Motor neuron (in vitro differentiated cells): ENCODE measurements at regions of chr3 and their contacts with region 1.

Region 1: GRCh38 chr3:142828703-142829305 is 60.1 kb downstream of the PCOLCE2 start:
- ATAC-seq: peak; percentile 95 to 100 (median 100)
- H3K4me3 ChIP-seq: no peak overlapping the region
- H3K27ac ChIP-seq: no peak overlapping the region
- H3K4me1 ChIP-seq: no peaks in the 10 kb centered on the region

Region 2: GRCh38 chr3:142418926-142419592 is 409.7 kb before region 1 on chr3:
- in situ Hi-C with region 1: no loop called
- ATAC-seq: no peak
- H3K4me3 ChIP-seq: no peak overlapping the region
- H3K27ac ChIP-seq: no peak overlapping the region
- H3K4me1 ChIP-seq: no peaks in the 10 kb centered on the region

Region 3: DNA sequence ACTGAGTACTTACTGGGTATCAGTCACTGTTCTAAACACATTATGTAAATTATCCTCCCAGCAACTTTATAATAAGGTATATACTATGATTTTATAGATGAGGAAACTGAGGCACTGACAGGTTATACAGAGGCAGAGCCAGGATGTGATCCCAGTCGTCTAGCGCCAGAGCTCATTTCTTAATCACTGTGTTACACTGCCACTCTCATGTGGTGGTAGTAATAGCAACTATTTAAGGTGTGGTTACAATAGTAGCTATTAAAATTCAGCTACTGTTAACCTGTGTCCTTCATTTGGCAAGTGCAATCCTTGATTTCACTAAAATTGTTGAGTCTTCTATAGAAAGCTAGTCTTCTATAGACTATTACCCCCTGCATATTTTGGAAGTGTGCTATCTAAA is 148.1 kb before region 1 on chr3:
- in situ Hi-C with region 1: no loop called
- ATAC-seq: peak in 2 of 8 experiments; percentile 17 to 71
- H3K4me3 ChIP-seq: no peak overlapping the region
- H3K27ac ChIP-seq: no peak overlapping the region
- H3K4me1 ChIP-seq: no peaks in the 10 kb centered on the region

Region 4: DNA sequence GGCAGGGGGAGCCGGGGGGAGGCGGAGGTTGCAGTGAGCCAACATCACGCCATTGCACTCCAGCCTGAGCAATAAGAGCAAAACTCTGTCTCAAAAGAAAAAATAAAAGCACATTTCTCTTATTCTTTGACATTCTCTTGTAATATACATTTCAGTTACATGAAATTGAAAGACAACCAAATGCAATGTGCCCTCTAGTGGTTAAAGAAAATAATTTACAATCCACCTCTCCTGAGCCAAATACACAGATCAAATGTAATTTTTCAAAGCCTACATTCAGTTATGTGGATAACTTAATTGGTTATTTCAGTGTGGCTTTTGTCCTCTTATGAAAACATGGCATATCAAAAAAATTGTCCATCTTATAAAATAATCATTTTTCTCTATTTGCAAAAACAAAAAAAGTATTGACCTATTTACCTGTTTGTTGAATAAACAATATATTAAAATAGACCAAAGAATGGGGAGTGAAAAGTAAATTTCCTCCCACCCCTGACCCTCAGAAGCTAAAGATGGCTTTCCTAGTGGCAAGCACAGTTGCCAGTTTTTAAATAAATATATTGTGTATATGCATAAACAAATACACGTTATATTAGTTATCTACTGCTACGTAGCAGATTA is 158.4 kb after region 1 on chr3:
- in situ Hi-C with region 1: loop called in 6 of 9 experiments (anchors 5 to 25 kb)
- ATAC-seq: peak in 3 of 8 experiments; percentile 51 to 63 (median 51)
- H3K4me3 ChIP-seq: no peak overlapping the region
- H3K27ac ChIP-seq: no peak overlapping the region
- H3K4me1 ChIP-seq: no peaks in the 10 kb centered on the region